AG04450 (cell line): ENCODE measurements at regions of chr4 and their contacts with region 1.

Region 1: DNA sequence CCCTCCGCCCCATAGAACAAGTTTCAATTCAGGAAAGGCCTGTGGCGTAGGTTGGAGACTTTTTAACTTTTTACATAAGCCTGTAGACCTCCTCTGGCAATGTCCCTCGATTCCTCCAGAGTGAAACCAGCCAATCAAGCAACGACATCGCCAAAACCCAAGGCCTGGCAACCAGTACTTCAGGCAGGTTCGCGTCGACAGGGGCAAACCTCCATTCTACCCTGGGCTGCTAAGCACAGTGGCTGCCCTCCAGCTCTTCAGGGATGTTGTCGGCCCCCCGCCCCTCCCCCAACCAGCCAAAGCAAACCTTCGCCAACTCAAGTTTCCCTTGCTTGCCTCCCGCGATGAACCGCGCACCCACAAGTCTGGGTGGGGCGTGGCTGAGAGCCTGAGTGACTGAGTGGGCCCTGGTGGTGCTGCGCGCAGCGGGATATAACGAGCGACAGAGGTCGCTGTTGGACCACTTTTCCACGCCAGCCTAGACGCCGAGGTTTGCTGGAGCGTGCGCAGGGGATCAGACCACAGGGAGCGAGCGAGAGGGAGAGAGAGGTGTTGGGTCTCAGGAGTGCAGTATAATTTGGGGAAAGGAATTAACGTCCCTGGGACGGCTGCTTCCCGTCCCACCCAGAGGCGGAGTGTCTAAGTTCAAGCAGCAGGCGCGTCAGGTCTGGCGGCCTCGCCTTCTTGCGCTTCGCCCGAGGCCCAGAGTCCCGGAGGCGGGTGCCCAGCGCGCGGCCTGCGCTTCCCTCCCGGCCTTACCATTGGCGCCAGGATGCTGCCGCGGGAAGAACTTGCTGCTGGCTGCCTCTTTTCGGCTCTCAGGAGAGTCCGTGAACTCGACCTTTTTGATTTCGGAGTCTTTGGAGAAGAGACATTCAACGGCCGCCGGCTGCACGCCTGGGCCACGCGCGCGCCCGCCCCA is 9.0 kb upstream of the PITX2 start:
- DNase-seq: peak; percentile 32
- H3K4me3 ChIP-seq: peak overlapping the region; percentile 50
- H3K27ac ChIP-seq: no peak overlapping the region
- H3K27me3 ChIP-seq: peaks cover 93% of the 10 kb centered on the region
- CTCF ChIP-seq: peak; percentile 83

Region 2: GRCh38 chr4:110245577-110245976 is 386.3 kb before region 1 on chr4:
- CTCF ChIA-PET with region 1: no interaction called
- POLR2A ChIA-PET with region 1: no interaction called
- DNase-seq: no peak
- H3K4me3 ChIP-seq: no peak overlapping the region
- H3K27ac ChIP-seq: no peak overlapping the region
- H3K27me3 ChIP-seq: no peaks in the 10 kb centered on the region
- CTCF ChIP-seq: no peak

Region 3: GRCh38 chr4:110597582-110597981 is 34.3 kb before region 1 on chr4:
- CTCF ChIA-PET with region 1: no interaction called
- POLR2A ChIA-PET with region 1: no interaction called
- DNase-seq: no peak
- H3K4me3 ChIP-seq: no peak overlapping the region
- H3K27ac ChIP-seq: no peak overlapping the region
- H3K27me3 ChIP-seq: no peaks in the 10 kb centered on the region
- CTCF ChIP-seq: no peak

Region 4: GRCh38 chr4:110959041-110959643 is 327.3 kb after region 1 on chr4:
- CTCF ChIA-PET with region 1: interaction called, 22 read pairs
- POLR2A ChIA-PET with region 1: no interaction called
- DNase-seq: no peak
- H3K4me3 ChIP-seq: no peak overlapping the region
- H3K27ac ChIP-seq: no peak overlapping the region
- H3K27me3 ChIP-seq: no peaks in the 10 kb centered on the region
- CTCF ChIP-seq: peak; percentile 39